GM10248 (cell line): ENCODE measurements at regions of chr7 and their contacts with region 1.

Region 1: GRCh38 chr7:4775250-4775847 is at the start of gene AP5Z1:
- DNase-seq: peak; percentile 99
- CTCF ChIP-seq: no peak

Region 2: GRCh38 chr7:4665661-4666060 is 109.7 kb before region 1 on chr7:
- CTCF ChIA-PET with region 1: no interaction called
- POLR2A ChIA-PET with region 1: no interaction called
- DNase-seq: no peak
- CTCF ChIP-seq: no peak

Region 3: DNA sequence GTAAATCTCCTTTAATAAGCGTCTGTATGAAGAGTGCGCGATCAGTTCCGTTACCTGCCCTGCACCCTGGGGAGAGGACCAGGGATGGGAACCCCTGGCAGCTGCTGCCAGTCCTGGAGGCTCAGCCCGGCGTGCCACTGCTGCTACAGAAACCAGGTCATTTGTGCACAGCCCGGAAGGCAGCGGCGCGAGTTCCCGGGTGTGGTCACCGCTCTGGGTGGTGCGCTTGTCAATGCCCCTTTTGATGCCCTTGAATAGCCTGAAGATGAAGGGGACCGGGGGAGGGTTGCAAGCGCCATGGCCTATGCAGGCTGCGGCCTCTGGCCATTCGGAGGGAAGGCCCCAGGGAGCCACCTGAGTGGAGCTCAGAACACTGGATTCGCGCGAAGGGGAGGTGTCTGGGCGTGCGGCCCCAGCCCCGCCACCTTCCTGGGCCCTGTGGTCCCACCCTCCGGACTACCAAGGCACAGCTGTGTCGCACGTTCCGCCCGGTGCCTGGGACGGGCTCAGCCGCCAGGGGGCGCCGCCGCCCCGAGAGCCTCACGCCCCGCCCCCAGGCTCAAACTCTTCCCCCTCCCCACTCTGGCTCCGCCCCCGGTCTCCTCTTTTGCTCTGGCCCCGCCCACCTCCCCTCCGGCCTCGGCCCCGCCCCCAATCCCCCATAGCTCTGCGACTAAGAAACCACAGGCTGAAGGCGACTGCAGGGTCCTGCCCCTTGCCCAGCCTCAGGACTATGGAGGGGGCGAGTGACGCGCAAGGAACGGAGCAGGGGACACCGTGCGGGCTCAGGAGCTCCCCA is 16.6 kb after region 1 on chr7:
- CTCF ChIA-PET with region 1: interaction called, 35 read pairs
- POLR2A ChIA-PET with region 1: interaction called, 6 read pairs
- DNase-seq: peak; percentile 89
- CTCF ChIP-seq: peak; percentile 74